Heart left ventricle (tissue), 16 donors: ENCODE measurements at regions of chr20 and their contacts with region 1.

Region 1: DNA sequence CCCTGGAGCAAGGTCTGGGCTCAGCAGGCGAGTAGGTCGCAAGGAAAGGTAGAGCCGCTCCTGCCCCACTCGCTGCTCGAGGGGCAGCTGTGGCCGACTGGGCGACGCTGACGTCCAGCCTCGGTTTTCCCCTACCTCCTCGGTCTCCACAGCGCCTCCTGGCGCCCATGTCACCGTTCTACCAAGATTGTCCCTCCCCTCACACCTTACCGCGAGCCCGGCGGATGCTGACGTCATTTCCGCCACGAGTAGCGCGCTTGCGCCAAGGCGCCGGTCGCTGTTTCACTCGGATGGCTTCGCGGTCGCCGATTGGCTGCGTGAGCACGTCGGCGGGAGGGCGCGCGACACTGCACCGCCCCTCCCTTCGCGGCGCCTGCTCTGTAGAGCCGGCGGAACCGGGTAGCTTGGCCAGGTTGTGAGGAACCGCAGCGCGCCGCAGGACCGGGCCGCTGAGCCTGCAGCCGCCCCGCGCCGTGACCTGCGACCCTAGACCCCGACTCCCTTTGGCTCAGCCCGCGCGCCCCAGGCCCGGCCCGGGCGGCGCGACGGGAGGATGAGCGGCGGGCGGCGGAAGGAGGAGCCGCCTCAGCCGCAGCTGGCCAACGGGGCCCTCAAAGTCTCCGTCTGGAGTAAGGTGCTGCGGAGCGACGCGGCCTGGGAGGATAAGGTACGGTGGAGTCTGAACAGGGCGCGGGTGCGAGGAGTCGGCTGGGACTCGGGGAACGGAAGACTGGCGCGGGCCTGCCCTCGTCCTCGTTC is at the start of gene RAB5IF:
- DNase-seq: peak; percentile 99 to 100 (median 99)
- ATAC-seq: peak; percentile 97 to 99 (median 98)
- H3K4me3 ChIP-seq: peak within 1 kb of the TSS; percentile 78 to 99 (median 93)
- H3K27ac ChIP-seq: peak within 1 kb of the TSS; percentile 72 to 96 (median 88)
- H3K4me1 ChIP-seq: peaks cover 4 to 34% (median 20%) of the 10 kb centered on the region in 12 donors
- H3K27me3 ChIP-seq: no peaks in the 10 kb centered on the region
- CTCF ChIP-seq: peak; percentile 76 to 98 (median 94)
- POLR2A ChIP-seq: peak in 1 of 2 donors; percentile 90
- total RNA-seq, gene RAB5IF: 35.5 to 87.7 (median 63.1) TPM

Region 2: DNA sequence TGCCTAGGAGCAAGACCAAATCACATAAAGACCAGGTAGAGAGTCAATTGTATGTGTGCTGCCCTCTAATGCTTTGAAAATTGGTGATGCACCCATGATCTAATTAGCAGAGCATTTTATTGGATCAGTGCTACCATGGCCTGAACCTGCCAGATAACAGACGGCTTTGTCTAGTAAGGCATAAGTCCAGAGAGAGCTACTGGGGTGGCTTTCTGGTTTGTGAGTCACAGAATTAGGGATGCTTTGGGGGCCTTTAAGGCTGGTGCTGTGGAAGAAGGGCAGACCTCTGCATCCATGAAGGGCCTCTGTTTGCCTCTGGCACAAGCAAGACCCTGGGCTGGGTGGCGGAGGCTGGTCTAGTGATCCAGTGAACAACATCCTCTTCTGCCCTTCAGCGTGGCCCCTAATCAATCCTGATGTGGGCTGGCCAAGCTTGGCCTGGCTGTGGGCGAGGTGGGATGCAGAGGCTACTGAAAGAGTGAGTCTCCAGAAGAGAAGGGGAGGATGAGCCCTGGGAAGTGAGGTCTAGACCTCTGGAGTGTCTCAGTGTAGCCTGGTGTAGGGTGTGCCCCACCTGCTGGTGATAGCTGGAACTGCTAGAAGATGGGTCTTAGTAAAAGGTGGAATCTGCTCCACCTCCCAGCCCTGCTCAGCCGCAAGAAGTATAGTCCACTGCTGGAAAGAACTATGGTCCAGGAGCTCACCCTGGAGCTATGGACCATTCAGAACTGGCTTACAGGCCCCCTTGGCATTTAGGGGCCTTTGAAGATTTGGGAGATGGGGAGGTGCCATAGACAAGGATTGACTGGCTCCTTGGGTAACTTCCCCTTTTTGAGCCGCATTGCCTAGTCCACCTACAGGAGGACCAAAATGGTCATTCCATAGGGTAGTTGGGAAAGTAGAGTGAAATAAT is 406.0 kb before region 1 on chr20:
- intact Hi-C with region 1: loop called in 1 of 10 experiments (anchors 10 kb)
- DNase-seq: peak; percentile 64 to 79 (median 74)
- ATAC-seq: peak in 3 of 4 donors; percentile 73 to 82 (median 74)
- H3K4me3 ChIP-seq: no peak overlapping the region
- H3K27ac ChIP-seq: no peak overlapping the region
- H3K4me1 ChIP-seq: peaks cover 0 to 6% (median 0%) of the 10 kb centered on the region in 12 donors
- H3K27me3 ChIP-seq: no peaks in the 10 kb centered on the region
- CTCF ChIP-seq: peak; percentile 84 to 96 (median 90)
- POLR2A ChIP-seq: no peak

Region 3: GRCh38 chr20:36214684-36215256 is 390.8 kb before region 1 on chr20:
- intact Hi-C with region 1: loop called in 2 of 10 experiments (anchors 10 kb)
- DNase-seq: no peak
- ATAC-seq: peak in 3 of 4 donors; percentile 44 to 63 (median 45)
- H3K4me3 ChIP-seq: no peak overlapping the region
- H3K27ac ChIP-seq: no peak overlapping the region
- H3K4me1 ChIP-seq: no peaks in the 10 kb centered on the region
- H3K27me3 ChIP-seq: no peaks in the 10 kb centered on the region
- CTCF ChIP-seq: peak; percentile 21 to 59 (median 47)
- POLR2A ChIP-seq: no peak

Region 4: DNA sequence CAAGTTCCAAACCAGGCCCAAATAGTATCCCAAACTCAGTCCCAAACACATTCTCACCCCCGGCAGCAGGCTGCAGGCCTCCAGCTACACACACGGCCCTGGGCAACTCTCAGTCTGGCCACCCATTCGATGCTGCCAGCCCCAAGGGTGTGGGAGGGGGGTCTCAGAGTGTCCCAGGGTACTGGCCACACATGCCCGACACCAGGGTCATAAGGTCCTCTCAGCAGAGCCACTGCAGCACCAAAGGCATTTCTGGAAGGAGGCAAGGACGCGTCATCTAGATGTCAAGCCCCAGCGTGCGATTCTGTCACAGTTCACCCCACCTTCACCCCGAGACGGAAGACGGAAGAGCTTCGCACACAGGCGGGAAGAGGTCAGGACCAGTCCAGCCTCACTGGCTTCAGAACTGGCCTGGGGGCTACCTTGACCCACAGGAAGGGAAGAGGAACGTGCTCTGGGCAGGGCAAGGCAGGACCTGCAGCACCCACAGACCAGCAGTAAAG is 54.7 kb before region 1 on chr20:
- intact Hi-C with region 1: loop called in 8 of 10 experiments (anchors 1 to 5 kb)
- DNase-seq: no peak
- ATAC-seq: peak; percentile 32 to 43 (median 37)
- H3K4me3 ChIP-seq: no peak overlapping the region
- H3K27ac ChIP-seq: peak overlapping the region in 10 of 12 donors; percentile 9 to 75 (median 48)
- H3K4me1 ChIP-seq: peaks cover 0 to 45% (median 5%) of the 10 kb centered on the region in 12 donors
- H3K27me3 ChIP-seq: no peaks in the 10 kb centered on the region
- CTCF ChIP-seq: no peak
- POLR2A ChIP-seq: no peak

Region 5: GRCh38 chr20:36573103-36573794 is 32.3 kb before region 1 on chr20 and contains the start of gene TGIF2:
- intact Hi-C with region 1: loop called in 1 of 10 experiments (anchors 5 kb)
- DNase-seq: peak; percentile 86 to 91 (median 89)
- ATAC-seq: peak; percentile 79 to 90 (median 88)
- H3K4me3 ChIP-seq: peak within 1 kb of the TSS; percentile 63 to 96 (median 82)
- H3K27ac ChIP-seq: peak within 1 kb of the TSS; percentile 75 to 93 (median 89)
- H3K4me1 ChIP-seq: peaks cover 0 to 38% (median 25%) of the 10 kb centered on the region in 12 donors
- H3K27me3 ChIP-seq: no peaks in the 10 kb centered on the region
- CTCF ChIP-seq: no peak
- POLR2A ChIP-seq: peak in 1 of 2 donors; percentile 41
- total RNA-seq, gene TGIF2: 4.5 to 14.9 (median 8.2) TPM

Region 6: DNA sequence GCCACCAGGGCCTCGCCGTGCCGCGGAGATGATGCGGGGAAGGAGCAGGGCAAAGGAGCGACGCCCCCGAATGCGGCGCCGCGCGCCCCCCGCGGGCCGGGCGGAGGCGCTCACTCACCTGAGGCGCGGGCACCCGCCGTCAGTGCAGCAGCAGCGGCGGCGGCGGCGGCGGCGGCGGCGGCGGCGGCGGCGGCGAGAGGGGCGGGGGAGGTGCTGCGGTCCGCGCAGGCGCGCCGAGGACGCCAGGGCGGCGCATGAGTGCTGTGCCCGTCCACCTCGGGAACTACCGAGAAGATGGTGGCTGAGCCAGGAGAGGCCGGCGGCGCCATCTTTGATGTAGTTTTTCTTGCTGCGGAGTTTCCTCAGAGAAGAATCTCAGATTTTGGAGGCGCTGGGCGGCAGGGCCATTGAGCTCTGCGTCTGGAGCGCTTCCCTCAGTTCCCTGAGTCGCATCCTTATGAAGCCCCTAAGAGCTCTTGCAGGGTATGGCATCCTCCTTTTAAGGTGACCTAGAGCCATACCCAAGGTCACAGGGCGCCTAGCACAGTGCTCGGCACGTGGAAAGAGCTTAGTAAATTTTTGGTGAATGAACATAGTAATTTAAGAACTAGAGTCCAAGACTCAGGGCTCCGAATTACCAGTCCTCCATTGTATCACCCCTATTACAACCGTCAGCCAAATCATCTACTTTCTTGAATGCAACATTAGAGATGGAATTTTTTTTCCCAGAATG is 140.5 kb after region 1 on chr20 and contains the start of gene NDRG3:
- intact Hi-C with region 1: loop called in 2 of 10 experiments (anchors 5 kb)
- DNase-seq: peak; percentile 94 to 97 (median 96)
- ATAC-seq: peak; percentile 89 to 96 (median 93)
- H3K4me3 ChIP-seq: peak within 1 kb of the TSS; percentile 71 to 99 (median 82)
- H3K27ac ChIP-seq: peak within 1 kb of the TSS; percentile 59 to 98 (median 91)
- H3K4me1 ChIP-seq: peaks cover 0 to 63% (median 22%) of the 10 kb centered on the region in 12 donors
- H3K27me3 ChIP-seq: no peaks in the 10 kb centered on the region
- CTCF ChIP-seq: no peak
- POLR2A ChIP-seq: peak in 1 of 2 donors; percentile 32
- total RNA-seq, gene NDRG3: 17.3 to 34.8 (median 31.1) TPM

Region 7: GRCh38 chr20:36773597-36774390 is 168.2 kb after region 1 on chr20 and contains the start of gene DSN1:
- intact Hi-C with region 1: loop called in 1 of 10 experiments (anchors 5 kb)
- DNase-seq: peak; percentile 97 to 100 (median 98)
- ATAC-seq: peak; percentile 95 to 98 (median 96)
- H3K4me3 ChIP-seq: peak within 1 kb of the TSS; percentile 41 to 93 (median 74)
- H3K27ac ChIP-seq: peak within 1 kb of the TSS; percentile 91 to 99 (median 97)
- H3K4me1 ChIP-seq: peaks cover 0 to 38% (median 18%) of the 10 kb centered on the region in 12 donors
- H3K27me3 ChIP-seq: no peaks in the 10 kb centered on the region
- CTCF ChIP-seq: peak in 2 of 12 donors; percentile 51 to 76
- POLR2A ChIP-seq: peak; percentile 6 to 69
- total RNA-seq, gene DSN1: 3.7 to 6.2 (median 4.9) TPM